ENCODE measurements at regions of chr2 and their contacts with region 1.

Region 1: DNA sequence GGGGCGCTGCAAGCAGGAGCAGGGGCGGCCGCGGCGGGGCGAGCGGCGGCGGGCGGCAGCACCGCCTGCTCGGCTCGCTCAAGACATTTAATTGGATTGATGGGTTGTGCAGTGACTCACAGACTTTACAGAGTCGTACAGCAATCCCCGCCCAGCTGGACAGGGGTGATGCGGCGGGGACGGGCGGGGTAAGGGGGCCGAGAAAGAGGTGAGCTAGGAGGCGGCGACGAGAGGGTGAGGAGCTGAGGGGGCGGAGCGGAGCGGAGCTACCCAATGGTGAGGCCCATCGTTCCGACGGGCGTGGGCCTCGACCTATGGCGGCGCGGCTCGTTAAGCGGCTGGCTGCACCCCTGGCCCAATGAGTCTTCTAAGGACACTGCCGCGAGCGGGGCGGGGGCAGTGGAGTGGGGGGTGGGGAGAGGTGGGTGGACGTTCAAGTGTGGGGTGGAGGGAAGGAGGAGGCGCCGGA is 97.1 kb upstream of the SERTAD2 start:
- DNase-seq: peak; percentile 99
- H3K4me3 ChIP-seq: peak overlapping the region; percentile 36 to 83 (median 62)
- H3K27ac ChIP-seq: peak overlapping the region; percentile 93 to 99 (median 98)
- H3K4me1 ChIP-seq: peaks cover 17 to 55% (median 44%) of the 10 kb centered on the region in 6 donors
- H3K27me3 ChIP-seq: no peaks in the 10 kb centered on the region
- CTCF ChIP-seq: peak in 2 of 11 experiments; percentile 12 to 19
- POLR2A ChIP-seq: peak; percentile 95 to 100 (median 98)

Region 2: DNA sequence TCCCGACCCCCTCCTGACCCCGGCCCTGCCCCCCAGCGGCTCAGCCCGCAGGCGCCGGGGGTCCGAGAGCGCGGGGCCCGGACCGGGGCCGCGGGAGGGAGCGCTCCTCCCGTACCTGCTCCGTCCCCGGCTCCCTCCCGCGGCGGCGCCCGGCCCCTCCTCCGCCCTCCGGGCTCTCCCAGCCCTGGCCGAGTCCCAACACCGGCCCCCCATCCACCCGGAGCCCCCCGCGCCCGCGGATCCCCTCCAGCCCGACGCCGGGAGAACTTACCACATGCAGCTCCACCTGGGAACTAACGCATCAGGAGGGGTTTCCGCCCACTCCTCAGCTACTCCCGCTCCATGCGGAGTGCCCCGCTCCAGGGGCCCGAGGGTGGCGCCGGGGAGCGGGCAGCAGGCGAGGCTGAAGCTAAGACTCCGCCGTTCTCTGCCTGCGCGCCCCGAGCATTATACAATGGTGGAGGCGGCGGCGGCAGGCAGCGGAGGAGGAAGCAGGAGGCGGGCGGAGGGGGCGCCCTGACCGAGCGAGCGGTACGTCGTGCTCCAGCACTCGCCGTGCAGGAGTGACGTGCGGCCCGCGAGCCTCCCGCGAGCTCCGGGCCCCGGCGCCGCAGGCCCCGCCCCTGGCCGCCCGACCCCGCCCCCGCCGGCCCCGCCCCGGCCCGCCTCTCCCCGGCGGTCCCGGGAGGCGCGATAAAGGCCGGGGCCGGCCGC is 97.3 kb before region 1 on chr2 and contains the start of gene SERTAD2:
- intact Hi-C with region 1: loop called (anchors 5 kb)
- DNase-seq: peak; percentile 99
- H3K4me3 ChIP-seq: peak within 1 kb of the TSS; percentile 62 to 91 (median 71)
- H3K27ac ChIP-seq: peak within 1 kb of the TSS; percentile 99 to 100 (median 100)
- H3K4me1 ChIP-seq: peaks cover 52 to 87% (median 81%) of the 10 kb centered on the region in 6 donors
- H3K27me3 ChIP-seq: no peaks in the 10 kb centered on the region
- CTCF ChIP-seq: peak in 6 of 11 experiments; percentile 19 to 44 (median 28)
- POLR2A ChIP-seq: peak; percentile 85 to 93 (median 86)
- total RNA-seq, gene SERTAD2: 31.2 to 61.4 (median 43.3) TPM